ENCODE measurements at regions of chr1 and their contacts with region 1.

Region 1: GRCh38 chr1:89657886-89658285 is 25.0 kb downstream of the LRRC8C start:
- DNase-seq: peak; percentile 76
- ATAC-seq: peak; percentile 84
- H3K4me3 ChIP-seq: no peak overlapping the region
- H3K27ac ChIP-seq: peak overlapping the region; percentile 35
- H3K4me1 ChIP-seq: peaks cover 23% of the 10 kb centered on the region
- H3K27me3 ChIP-seq: no peaks in the 10 kb centered on the region
- CTCF ChIP-seq: no peak
- EP300 ChIP-seq: peak in 1 of 2 experiments; percentile 57; a peak in 1 of 4 replicates
- POLR2A ChIP-seq: no peak
- RAD21 ChIP-seq: no peak

Region 2: DNA sequence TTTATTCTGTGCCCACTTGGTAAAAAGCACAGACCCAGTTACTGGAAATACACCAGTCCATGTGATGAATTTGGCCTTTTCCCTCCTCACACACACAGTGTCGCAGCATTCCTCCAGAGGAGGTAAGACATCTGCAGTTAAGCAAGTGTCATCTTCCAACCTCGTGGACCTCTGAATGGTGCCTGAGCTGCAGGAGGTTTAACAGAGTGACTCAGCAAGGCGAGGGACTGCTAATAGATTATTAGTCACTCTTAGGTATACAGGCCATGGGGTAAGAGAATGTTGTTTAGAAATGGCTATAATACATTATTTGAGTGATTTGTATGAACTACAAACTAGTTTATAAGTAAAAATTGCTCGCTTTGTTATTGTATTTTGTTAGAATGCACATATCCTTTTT is 141.8 kb before region 1 on chr1:
- CTCF ChIA-PET with region 1: no interaction called
- POLR2A ChIA-PET with region 1: no interaction called
- RAD21 ChIA-PET with region 1: no interaction called
- SMC1A ChIA-PET with region 1: no interaction called
- in situ Hi-C with region 1: no loop called
- intact Hi-C with region 1: no loop called
- DNase-seq: no peak
- ATAC-seq: no peak
- H3K4me3 ChIP-seq: no peak overlapping the region
- H3K27ac ChIP-seq: no peak overlapping the region
- H3K4me1 ChIP-seq: no peaks in the 10 kb centered on the region
- H3K27me3 ChIP-seq: no peaks in the 10 kb centered on the region
- CTCF ChIP-seq: no peak
- EP300 ChIP-seq: no peak
- POLR2A ChIP-seq: no peak
- RAD21 ChIP-seq: no peak

Region 3: GRCh38 chr1:89587728-89588127 is 70.2 kb before region 1 on chr1:
- CTCF ChIA-PET with region 1: no interaction called
- POLR2A ChIA-PET with region 1: no interaction called
- RAD21 ChIA-PET with region 1: no interaction called
- SMC1A ChIA-PET with region 1: no interaction called
- in situ Hi-C with region 1: no loop called
- intact Hi-C with region 1: no loop called
- DNase-seq: no peak
- ATAC-seq: no peak
- H3K4me3 ChIP-seq: no peak overlapping the region
- H3K27ac ChIP-seq: no peak overlapping the region
- H3K4me1 ChIP-seq: peaks cover 6% of the 10 kb centered on the region
- H3K27me3 ChIP-seq: no peaks in the 10 kb centered on the region
- CTCF ChIP-seq: no peak
- EP300 ChIP-seq: no peak
- POLR2A ChIP-seq: no peak
- RAD21 ChIP-seq: no peak

Region 4: GRCh38 chr1:89641781-89642180 is 16.1 kb before region 1 on chr1:
- CTCF ChIA-PET with region 1: interaction called, 11 read pairs
- POLR2A ChIA-PET with region 1: interaction called, 13 read pairs
- RAD21 ChIA-PET with region 1: interaction called, 4 read pairs
- SMC1A ChIA-PET with region 1: interaction called, 189 read pairs
- in situ Hi-C with region 1: no loop called
- intact Hi-C with region 1: no loop called
- DNase-seq: no peak
- ATAC-seq: no peak
- H3K4me3 ChIP-seq: no peak overlapping the region
- H3K27ac ChIP-seq: no peak overlapping the region
- H3K4me1 ChIP-seq: no peaks in the 10 kb centered on the region
- H3K27me3 ChIP-seq: no peaks in the 10 kb centered on the region
- CTCF ChIP-seq: no peak
- EP300 ChIP-seq: no peak
- POLR2A ChIP-seq: no peak
- RAD21 ChIP-seq: no peak

Region 5: GRCh38 chr1:89675677-89676076 is 17.8 kb after region 1 on chr1:
- CTCF ChIA-PET with region 1: interaction called, 68 read pairs
- POLR2A ChIA-PET with region 1: interaction called, 57 read pairs
- RAD21 ChIA-PET with region 1: interaction called, 76 read pairs
- SMC1A ChIA-PET with region 1: interaction called, 353 read pairs
- in situ Hi-C with region 1: no loop called
- intact Hi-C with region 1: no loop called
- DNase-seq: no peak
- ATAC-seq: no peak
- H3K4me3 ChIP-seq: no peak overlapping the region
- H3K27ac ChIP-seq: no peak overlapping the region
- H3K4me1 ChIP-seq: peaks cover 16% of the 10 kb centered on the region
- H3K27me3 ChIP-seq: no peaks in the 10 kb centered on the region
- CTCF ChIP-seq: no peak
- EP300 ChIP-seq: no peak
- POLR2A ChIP-seq: no peak
- RAD21 ChIP-seq: no peak

Region 6: DNA sequence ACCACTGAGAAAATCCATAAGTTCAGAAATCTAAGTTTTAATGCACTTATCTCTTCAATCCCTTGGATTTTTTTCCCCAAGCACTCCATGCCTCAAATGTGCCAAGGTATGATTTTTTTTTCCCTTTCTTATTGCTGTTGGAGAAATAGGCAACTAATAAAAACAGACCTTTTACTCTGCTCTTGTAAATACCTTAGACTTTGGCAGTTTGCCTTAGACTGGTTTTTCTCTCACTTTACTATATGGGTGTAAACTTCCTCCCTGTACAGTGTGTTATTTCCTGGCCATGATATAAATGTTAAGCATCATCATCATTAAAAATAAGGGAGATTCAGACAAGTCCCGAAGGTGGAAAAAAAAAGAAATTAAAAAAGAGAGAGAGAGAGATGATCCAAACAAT is 40.7 kb after region 1 on chr1:
- CTCF ChIA-PET with region 1: interaction called, 5 read pairs
- POLR2A ChIA-PET with region 1: interaction called, 4 read pairs
- RAD21 ChIA-PET with region 1: interaction called, 8 read pairs
- SMC1A ChIA-PET with region 1: interaction called, 19 read pairs
- in situ Hi-C with region 1: no loop called
- intact Hi-C with region 1: no loop called
- DNase-seq: no peak
- ATAC-seq: no peak
- H3K4me3 ChIP-seq: no peak overlapping the region
- H3K27ac ChIP-seq: no peak overlapping the region; the same call in 1 of the 2 replicates
- H3K4me1 ChIP-seq: peaks cover 22% of the 10 kb centered on the region
- H3K27me3 ChIP-seq: no peaks in the 10 kb centered on the region
- CTCF ChIP-seq: no peak
- EP300 ChIP-seq: no peak
- POLR2A ChIP-seq: no peak
- RAD21 ChIP-seq: no peak

Region 7: DNA sequence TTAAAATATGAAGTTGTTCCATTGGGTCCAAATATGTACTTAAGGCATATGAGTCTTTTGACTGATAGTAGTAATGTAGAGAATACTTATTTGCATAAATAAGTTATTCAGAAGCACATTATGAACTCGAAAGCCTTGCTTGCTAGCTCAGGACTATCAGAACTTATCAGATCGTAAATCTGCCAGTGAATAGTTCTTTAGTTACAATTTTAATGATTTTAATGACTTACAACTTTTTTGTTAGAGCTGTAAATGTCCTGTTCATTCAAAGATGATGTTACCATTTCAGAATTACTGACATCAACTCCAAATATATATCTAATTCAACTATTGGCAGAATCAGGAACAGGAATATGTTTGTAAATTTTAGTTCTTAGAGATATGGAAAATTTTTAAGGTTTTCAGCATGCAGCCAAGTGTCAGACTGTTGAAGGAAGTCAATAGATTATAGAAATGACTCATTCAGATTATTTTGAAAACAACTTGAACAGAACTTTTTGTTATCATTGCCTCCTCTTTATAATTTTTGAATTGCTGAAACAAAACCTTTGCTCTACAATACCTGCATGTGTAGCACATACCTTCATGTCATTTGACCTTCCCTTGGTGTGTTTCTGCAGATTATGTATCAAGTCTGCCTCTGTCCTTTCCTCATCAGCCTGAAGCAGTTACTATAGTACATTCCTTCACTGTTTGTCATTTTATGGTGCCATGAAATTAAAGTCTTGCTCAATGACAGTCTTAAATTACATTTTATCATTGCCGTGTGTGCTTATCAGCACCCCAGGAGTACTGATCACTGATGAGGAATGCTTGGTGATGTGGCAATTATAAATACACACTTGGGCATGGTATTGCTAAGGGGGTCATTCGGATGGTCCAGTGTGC is 207.9 kb after region 1 on chr1:
- CTCF ChIA-PET with region 1: no interaction called
- POLR2A ChIA-PET with region 1: no interaction called
- RAD21 ChIA-PET with region 1: no interaction called
- SMC1A ChIA-PET with region 1: no interaction called
- in situ Hi-C with region 1: no loop called
- intact Hi-C with region 1: no loop called
- DNase-seq: no peak
- ATAC-seq: no peak
- H3K4me3 ChIP-seq: no peak overlapping the region
- H3K27ac ChIP-seq: no peak overlapping the region
- H3K4me1 ChIP-seq: no peaks in the 10 kb centered on the region
- H3K27me3 ChIP-seq: no peaks in the 10 kb centered on the region
- CTCF ChIP-seq: no peak
- EP300 ChIP-seq: no peak
- POLR2A ChIP-seq: no peak
- RAD21 ChIP-seq: no peak

Measured in GM12878 (cell line).